CD8-positive, alpha-beta T cell (primary cell): ENCODE measurements at regions of chr7 and their contacts with region 1.

Region 1: GRCh38 chr7:17769918-17770317 is 170.4 kb downstream of the SNX13 start:
- DNase-seq: peak; percentile 4 to 63 (median 43)
- ATAC-seq: peak; percentile 40
- H3K4me3 ChIP-seq: no peak overlapping the region
- H3K4me3 Mint-ChIP-seq: no peak overlapping the region
- H3K27ac ChIP-seq: no peak overlapping the region
- H3K27ac Mint-ChIP-seq: no peak overlapping the region
- H3K4me1 ChIP-seq: no peaks in the 10 kb centered on the region
- H3K4me1 Mint-ChIP-seq: peaks cover 3% of the 10 kb centered on the region
- H3K27me3 ChIP-seq: no peaks in the 10 kb centered on the region
- H3K27me3 Mint-ChIP-seq: no peaks in the 10 kb centered on the region
- CTCF ChIP-seq: peak; percentile 56

Region 2: GRCh38 chr7:17991866-17992648 is 222.1 kb after region 1 on chr7:
- CTCF ChIA-PET with region 1: no interaction called
- POLR2A ChIA-PET with region 1: no interaction called
- intact Hi-C with region 1: loop called in 1 of 2 experiments (anchors 5 kb)
- DNase-seq: peak in 3 of 9 experiments; percentile 5 to 15 (median 13)
- ATAC-seq: no peak
- H3K4me3 ChIP-seq: no peak overlapping the region
- H3K4me3 Mint-ChIP-seq: no peak overlapping the region
- H3K27ac ChIP-seq: no peak overlapping the region
- H3K27ac Mint-ChIP-seq: no peak overlapping the region
- H3K4me1 ChIP-seq: no peaks in the 10 kb centered on the region
- H3K4me1 Mint-ChIP-seq: no peaks in the 10 kb centered on the region
- H3K27me3 ChIP-seq: no peaks in the 10 kb centered on the region
- H3K27me3 Mint-ChIP-seq: peaks cover 7% of the 10 kb centered on the region
- CTCF ChIP-seq: no peak

Region 3: GRCh38 chr7:18320971-18321567 is 551.2 kb after region 1 on chr7:
- CTCF ChIA-PET with region 1: interaction called, 14 read pairs
- POLR2A ChIA-PET with region 1: no interaction called
- intact Hi-C with region 1: loop called in 1 of 2 experiments (anchors 5 kb)
- DNase-seq: peak in 2 of 9 experiments; percentile 49 to 60
- ATAC-seq: no peak
- H3K4me3 ChIP-seq: no peak overlapping the region
- H3K4me3 Mint-ChIP-seq: no peak overlapping the region
- H3K27ac ChIP-seq: no peak overlapping the region
- H3K27ac Mint-ChIP-seq: no peak overlapping the region
- H3K4me1 ChIP-seq: no peaks in the 10 kb centered on the region
- H3K4me1 Mint-ChIP-seq: no peaks in the 10 kb centered on the region
- H3K27me3 ChIP-seq: no peaks in the 10 kb centered on the region
- H3K27me3 Mint-ChIP-seq: peaks cover 4% of the 10 kb centered on the region
- CTCF ChIP-seq: peak; percentile 39

Region 4: GRCh38 chr7:18666107-18666728 is 896.3 kb after region 1 on chr7:
- CTCF ChIA-PET with region 1: no interaction called
- POLR2A ChIA-PET with region 1: no interaction called
- intact Hi-C with region 1: loop called (anchors 5 kb)
- DNase-seq: peak; percentile 13 to 76 (median 59)
- ATAC-seq: peak; percentile 46
- H3K4me3 ChIP-seq: no peak overlapping the region
- H3K4me3 Mint-ChIP-seq: no peak overlapping the region
- H3K27ac ChIP-seq: no peak overlapping the region
- H3K27ac Mint-ChIP-seq: no peak overlapping the region
- H3K4me1 ChIP-seq: no peaks in the 10 kb centered on the region
- H3K4me1 Mint-ChIP-seq: peaks cover 3% of the 10 kb centered on the region
- H3K27me3 ChIP-seq: no peaks in the 10 kb centered on the region
- H3K27me3 Mint-ChIP-seq: no peaks in the 10 kb centered on the region
- CTCF ChIP-seq: peak; percentile 79

Region 5: DNA sequence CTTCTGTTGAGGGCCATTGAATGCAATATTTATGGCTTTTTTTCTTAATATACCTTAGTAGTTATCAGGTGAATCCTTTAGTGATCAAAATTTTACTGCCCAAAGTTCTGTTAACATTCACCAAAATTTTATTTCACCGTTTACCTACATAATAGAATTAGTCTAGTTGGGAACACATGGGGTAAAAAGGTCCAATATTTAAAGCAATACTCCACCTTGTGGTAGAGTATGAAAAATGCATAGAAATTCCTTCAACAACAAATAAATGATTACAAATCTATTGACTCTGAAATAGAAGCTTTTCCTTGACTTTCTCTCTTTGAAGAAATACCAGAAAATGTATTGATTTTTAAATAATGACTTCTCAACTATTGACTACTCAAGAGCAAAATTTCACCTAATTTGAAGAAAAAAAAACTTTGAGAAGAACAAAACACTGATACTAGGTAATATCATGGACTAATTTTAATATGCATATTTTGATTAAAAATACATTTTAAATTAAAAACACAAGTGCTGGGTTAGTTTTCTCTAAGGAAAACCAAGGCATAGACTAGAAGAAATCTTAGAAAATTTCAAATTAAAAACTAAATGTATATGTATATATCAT is 1895.6 kb after region 1 on chr7:
- CTCF ChIA-PET with region 1: no interaction called
- POLR2A ChIA-PET with region 1: no interaction called
- intact Hi-C with region 1: loop called in 1 of 2 experiments (anchors 10 kb)
- DNase-seq: peak in 2 of 9 experiments; percentile 11 to 32
- ATAC-seq: no peak
- H3K4me3 ChIP-seq: no peak overlapping the region
- H3K4me3 Mint-ChIP-seq: no peak overlapping the region
- H3K27ac ChIP-seq: no peak overlapping the region
- H3K27ac Mint-ChIP-seq: no peak overlapping the region
- H3K4me1 ChIP-seq: no peaks in the 10 kb centered on the region
- H3K4me1 Mint-ChIP-seq: peaks cover 12% of the 10 kb centered on the region
- H3K27me3 ChIP-seq: no peaks in the 10 kb centered on the region
- H3K27me3 Mint-ChIP-seq: peaks cover 3% of the 10 kb centered on the region
- CTCF ChIP-seq: peak; percentile 75